Vagina (tissue), 2 donors: ENCODE measurements at regions of chr5 and their contacts with region 1.

Region 1: DNA sequence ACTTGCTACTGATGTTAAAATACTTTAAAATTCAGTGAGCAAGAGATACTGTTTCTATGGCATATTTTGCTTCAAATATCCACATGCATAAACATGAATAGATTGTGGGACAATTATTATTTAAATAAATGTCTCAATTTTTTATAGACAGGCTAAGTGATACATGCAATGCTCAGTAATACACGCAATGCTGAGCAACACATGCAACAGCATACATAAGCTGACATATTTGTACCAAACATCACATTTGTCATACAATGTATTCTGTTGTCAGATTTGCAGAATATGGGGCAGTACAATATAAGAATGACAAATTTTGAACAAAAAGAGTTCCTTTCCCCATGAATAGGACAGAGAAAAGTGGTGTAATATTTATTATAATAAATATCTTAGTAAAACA is 155.5 kb downstream of the PDE4D start:
- DNase-seq: no peak
- H3K4me3 ChIP-seq: no peak overlapping the region
- H3K27ac ChIP-seq: no peak overlapping the region
- H3K4me1 ChIP-seq: no peaks in the 10 kb centered on the region
- H3K27me3 ChIP-seq: no peaks in the 10 kb centered on the region
- CTCF ChIP-seq: no peak
- POLR2A ChIP-seq: no peak

Region 2: DNA sequence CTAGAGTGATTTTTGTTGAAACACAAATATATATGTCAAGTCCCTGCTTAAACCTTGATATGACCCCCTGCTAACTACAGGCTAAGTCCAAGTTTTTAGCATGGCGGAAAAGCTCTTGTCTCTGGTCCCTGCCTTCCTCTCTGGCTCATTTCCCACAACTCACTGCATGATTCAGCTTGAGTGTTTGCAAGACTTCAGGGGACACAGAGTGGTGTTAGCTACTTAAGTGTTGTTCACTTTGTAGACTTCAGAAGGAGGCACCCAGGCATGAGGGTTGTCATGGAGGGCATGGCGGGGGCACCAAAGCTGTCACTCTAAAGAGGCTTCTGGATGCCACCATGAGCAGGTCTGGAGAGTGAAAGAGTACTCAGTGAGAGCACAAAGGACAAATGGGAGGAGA is 1893.0 kb before region 1 on chr5:
- intact Hi-C with region 1: loop called (anchors 5 kb)
- DNase-seq: no peak
- H3K4me3 ChIP-seq: no peak overlapping the region
- H3K27ac ChIP-seq: no peak overlapping the region
- H3K4me1 ChIP-seq: peaks cover 22% of the 10 kb centered on the region
- H3K27me3 ChIP-seq: no peaks in the 10 kb centered on the region
- CTCF ChIP-seq: no peak
- POLR2A ChIP-seq: no peak

Region 3: DNA sequence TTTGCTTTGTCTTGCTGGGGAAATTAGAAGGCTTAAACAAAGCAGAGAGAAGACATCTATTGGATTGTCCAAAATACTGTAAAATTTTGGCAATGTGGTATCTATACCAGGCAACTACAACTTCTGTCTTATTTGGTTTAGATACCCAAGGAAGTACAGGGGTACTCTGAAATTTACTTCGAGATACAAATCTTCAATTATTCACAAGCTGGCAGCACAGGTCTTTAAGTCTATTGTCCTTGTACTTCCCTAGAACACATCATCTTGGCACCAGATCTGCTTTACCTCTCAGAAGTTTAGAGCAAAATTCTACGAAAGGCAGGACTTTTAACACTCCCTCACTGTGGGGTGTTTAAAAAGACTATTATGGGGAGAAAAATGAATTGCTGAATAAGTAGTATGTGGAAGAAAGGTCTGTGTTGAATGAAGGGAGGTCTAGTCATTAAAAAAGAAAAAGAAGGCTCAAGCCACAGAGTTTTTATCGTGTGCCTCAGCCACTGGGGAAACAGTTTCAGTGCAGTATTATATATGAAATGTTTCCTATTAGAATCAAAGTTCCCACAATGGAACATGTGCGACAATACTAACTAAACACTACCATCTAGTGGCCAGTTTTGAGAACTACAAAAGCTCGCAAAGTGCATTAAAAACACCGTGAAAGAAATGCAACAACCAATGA is 61.8 kb after region 1 on chr5:
- intact Hi-C with region 1: no loop called
- DNase-seq: no peak
- H3K4me3 ChIP-seq: peak overlapping the region in 1 of 2 donors; percentile 17
- H3K27ac ChIP-seq: peak overlapping the region; percentile 65
- H3K4me1 ChIP-seq: peaks cover 14% of the 10 kb centered on the region
- H3K27me3 ChIP-seq: no peaks in the 10 kb centered on the region
- CTCF ChIP-seq: peak; percentile 76 to 87 (median 79)
- POLR2A ChIP-seq: no peak

Region 4: GRCh38 chr5:60210810-60211209 is 472.8 kb after region 1 on chr5:
- intact Hi-C with region 1: no loop called
- DNase-seq: no peak
- H3K4me3 ChIP-seq: no peak overlapping the region
- H3K27ac ChIP-seq: no peak overlapping the region
- H3K4me1 ChIP-seq: no peaks in the 10 kb centered on the region
- H3K27me3 ChIP-seq: no peaks in the 10 kb centered on the region
- CTCF ChIP-seq: no peak
- POLR2A ChIP-seq: no peak